BJ (cell line): ENCODE measurements at regions of chr7 and their contacts with region 1.

Region 1: DNA sequence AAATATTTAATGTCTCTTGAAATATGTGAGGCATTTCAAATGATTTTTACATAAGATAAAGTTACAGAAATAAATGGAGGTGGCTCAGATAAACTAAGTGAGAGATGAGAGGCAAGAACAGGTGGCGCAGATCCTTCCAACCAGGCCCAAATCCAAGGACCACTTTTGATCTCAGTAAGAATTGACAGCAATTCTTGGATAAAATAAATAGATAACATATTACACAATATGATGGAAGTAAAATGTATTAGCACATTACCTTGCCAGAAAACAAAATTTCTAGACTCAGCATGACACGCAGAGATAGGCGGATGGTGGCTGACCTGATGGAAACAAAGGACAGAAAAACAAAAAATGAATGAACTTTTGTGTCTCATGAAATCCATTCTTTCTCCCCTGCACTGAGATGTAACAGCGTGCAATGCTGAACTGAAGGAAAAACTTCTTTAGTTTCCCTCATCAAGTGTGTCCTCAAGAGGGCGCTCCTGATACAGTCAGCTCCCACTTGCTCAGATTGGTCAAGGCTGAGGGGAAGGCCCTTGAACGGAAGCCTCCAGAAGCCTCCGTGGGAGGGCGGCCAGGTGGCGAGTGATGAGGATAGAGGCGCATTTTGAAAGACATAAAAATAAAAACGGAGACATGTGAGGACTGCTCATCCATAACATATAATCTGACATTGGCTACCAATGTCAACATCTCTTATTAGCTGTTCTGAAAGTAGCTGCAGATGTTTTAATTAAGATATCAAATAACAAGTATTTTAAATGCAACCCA is 62.8 kb upstream of the GSDME start:
- DNase-seq: peak; percentile 34
- H3K4me3 ChIP-seq: no peak overlapping the region
- H3K27me3 ChIP-seq: no peaks in the 10 kb centered on the region
- CTCF ChIP-seq: peak; percentile 90

Region 2: DNA sequence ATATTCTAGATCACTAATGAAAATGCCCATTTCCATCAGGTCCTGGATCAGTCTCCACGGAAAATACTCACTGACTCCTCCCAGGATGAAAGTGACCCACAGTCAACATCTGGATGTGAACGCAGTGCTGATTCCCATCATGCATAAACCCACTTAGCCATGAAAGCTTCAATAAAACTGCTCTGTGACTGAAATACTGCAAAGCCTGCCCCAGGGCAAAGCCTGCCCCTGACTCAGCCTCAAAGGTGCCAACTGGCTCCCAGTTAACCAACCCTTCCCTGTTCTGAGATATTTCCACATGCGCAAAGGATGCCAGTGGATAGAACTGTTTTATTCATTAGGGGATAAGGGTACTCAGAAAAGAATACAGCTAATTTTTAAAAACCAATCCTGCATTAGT is 135.9 kb after region 1 on chr7:
- CTCF ChIA-PET with region 1: no interaction called
- POLR2A ChIA-PET with region 1: no interaction called
- DNase-seq: no peak
- H3K4me3 ChIP-seq: no peak overlapping the region
- H3K27me3 ChIP-seq: no peaks in the 10 kb centered on the region
- CTCF ChIP-seq: no peak

Region 3: GRCh38 chr7:24979863-24980533 is 159.9 kb after region 1 on chr7 and contains the start of gene OSBPL3:
- CTCF ChIA-PET with region 1: interaction called, 49 read pairs
- POLR2A ChIA-PET with region 1: interaction called, 3 read pairs
- DNase-seq: peak; percentile 71
- H3K4me3 ChIP-seq: peak within 1 kb of the TSS; percentile 60
- H3K27me3 ChIP-seq: no peaks in the 10 kb centered on the region
- CTCF ChIP-seq: no peak
- polyA plus RNA-seq, gene OSBPL3: 26.5 and 27.1 TPM in 2 replicates

Region 4: GRCh38 chr7:25062380-25062779 is 242.3 kb after region 1 on chr7:
- CTCF ChIA-PET with region 1: interaction called, 10 read pairs
- POLR2A ChIA-PET with region 1: no interaction called
- DNase-seq: no peak
- H3K4me3 ChIP-seq: no peak overlapping the region
- H3K27me3 ChIP-seq: no peaks in the 10 kb centered on the region
- CTCF ChIP-seq: no peak

Region 5: GRCh38 chr7:25069900-25070443 is 249.9 kb after region 1 on chr7:
- CTCF ChIA-PET with region 1: interaction called, 32 read pairs
- POLR2A ChIA-PET with region 1: no interaction called
- DNase-seq: peak; percentile 49
- H3K4me3 ChIP-seq: no peak overlapping the region
- H3K27me3 ChIP-seq: no peaks in the 10 kb centered on the region
- CTCF ChIP-seq: peak; percentile 77

Region 6: GRCh38 chr7:25116621-25117020 is 296.5 kb after region 1 on chr7:
- CTCF ChIA-PET with region 1: no interaction called
- POLR2A ChIA-PET with region 1: no interaction called
- DNase-seq: no peak
- H3K4me3 ChIP-seq: no peak overlapping the region
- H3K27me3 ChIP-seq: no peaks in the 10 kb centered on the region
- CTCF ChIP-seq: no peak